Right ventricle myocardium inferior (tissue), 1 donor: ENCODE measurements at regions of chr4 and their contacts with region 1.

Region 1: GRCh38 chr4:53929955-53930798 is 134.2 kb downstream of the CHIC2 start:
- DNase-seq: peak; percentile 69
- ATAC-seq: peak; percentile 92

Region 2: GRCh38 chr4:53009824-53010223 is 920.4 kb before region 1 on chr4:
- intact Hi-C with region 1: loop called (anchors 10 kb)
- DNase-seq: no peak
- ATAC-seq: no peak

Region 3: GRCh38 chr4:53886090-53886489 is 44.1 kb before region 1 on chr4:
- intact Hi-C with region 1: no loop called
- DNase-seq: no peak
- ATAC-seq: no peak